ENCODE measurements at regions of chr18 and their contacts with region 1.

Region 1: DNA sequence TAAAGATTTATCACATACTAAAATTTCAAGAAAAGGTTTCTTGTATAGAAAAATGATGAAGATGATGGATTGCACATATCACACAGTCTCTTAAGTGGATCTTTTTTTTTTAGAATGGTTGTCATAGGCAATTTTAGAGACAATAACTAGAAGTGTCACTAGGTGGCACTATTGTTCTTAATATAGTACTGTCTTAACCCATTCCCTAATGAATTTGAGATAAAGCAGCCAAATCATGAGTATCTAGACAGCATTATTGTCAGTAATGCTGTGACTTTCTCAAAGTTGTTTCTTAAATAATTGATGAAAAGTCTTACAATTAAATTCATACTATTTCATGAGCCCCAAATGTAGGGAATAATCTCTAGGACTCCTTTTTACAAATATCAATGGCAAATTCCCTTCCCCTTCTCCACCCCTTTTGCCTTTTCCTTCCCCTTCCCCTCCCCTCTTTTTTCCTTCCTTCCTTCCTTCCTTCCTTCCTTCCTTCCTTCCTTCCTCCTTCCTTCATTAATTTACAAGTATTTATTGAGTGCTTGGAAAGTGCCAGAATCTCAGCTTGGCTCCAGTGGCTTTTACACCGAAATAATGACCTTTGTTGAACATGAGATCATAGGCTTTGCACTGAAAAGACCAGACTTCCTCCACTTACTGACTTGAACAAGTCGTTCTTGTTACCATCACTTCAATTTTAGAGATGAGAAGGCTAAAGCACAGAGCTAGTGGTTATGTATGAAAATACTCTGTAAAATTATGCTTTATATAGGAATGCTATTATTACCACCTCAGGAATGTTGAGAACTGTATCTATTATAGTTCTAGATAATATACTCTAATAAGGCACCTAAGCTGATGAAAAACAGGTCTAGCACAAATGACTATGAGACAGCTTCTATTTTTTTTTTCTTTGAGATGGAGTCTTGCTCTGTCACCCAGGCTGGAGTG is 19.8 kb downstream of the MYL12B start:
- DNase-seq: peak in 1 of 2 experiments; percentile 78
- H3K4me3 ChIP-seq: no peak overlapping the region
- H3K4me3 Mint-ChIP-seq: no peak overlapping the region
- H3K27ac Mint-ChIP-seq: no peak overlapping the region
- H3K4me1 ChIP-seq: no peaks in the 10 kb centered on the region
- H3K4me1 Mint-ChIP-seq: peaks cover 13% of the 10 kb centered on the region
- H3K27me3 ChIP-seq: no peaks in the 10 kb centered on the region
- H3K27me3 Mint-ChIP-seq: no peaks in the 10 kb centered on the region
- CTCF ChIP-seq: peak; percentile 33 to 66

Region 2: DNA sequence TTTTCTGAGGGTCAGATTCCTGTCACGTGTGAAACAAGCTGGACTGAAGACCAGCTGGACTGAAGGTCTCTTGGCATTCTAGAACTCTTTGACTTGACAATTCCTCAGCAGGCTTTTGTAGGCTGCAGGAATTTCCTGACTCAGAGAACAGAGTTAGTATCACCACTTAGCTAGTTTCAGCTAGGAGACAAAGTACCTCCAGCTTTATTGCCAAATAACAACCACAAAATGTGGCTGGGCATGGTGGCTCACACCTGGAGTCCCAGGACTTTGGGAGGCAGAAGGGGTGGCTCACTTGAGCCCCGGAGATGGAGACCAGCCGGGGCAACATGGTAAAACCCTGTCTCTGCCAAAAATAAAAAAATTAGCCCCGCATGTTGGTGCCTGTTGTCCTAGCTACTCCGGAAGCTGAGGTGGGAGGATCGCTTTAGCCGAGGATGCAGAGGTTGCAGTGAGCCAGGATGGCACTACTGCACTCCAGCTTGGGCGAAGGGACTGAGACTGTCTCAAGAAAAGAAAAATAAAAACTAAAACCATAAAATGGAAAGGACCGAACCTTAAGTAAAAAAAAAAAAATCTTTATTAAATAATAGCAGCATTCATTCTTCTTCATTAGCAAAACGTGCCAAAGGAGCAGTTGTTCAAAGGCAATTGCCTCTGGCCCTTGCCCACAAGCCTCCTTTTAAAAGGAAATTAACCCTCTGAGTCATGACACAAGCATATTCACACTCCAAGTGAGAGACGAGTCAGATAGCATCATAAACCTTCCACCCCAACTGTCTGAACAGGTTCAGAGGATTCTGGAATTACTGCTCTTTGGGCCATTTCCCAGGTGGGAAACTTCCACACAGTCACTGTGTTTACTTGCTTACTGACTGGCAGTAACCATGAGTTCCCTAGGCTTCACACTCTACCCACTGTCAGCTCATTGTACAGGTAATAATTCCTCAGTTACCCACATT is 69.1 kb after region 1 on chr18:
- CTCF ChIA-PET with region 1: no interaction called
- POLR2A ChIA-PET with region 1: no interaction called
- intact Hi-C with region 1: no loop called
- DNase-seq: no peak
- H3K4me3 ChIP-seq: no peak overlapping the region
- H3K4me3 Mint-ChIP-seq: no peak overlapping the region
- H3K27ac Mint-ChIP-seq: no peak overlapping the region
- H3K4me1 ChIP-seq: no peaks in the 10 kb centered on the region
- H3K4me1 Mint-ChIP-seq: no peaks in the 10 kb centered on the region
- H3K27me3 ChIP-seq: no peaks in the 10 kb centered on the region
- H3K27me3 Mint-ChIP-seq: no peaks in the 10 kb centered on the region
- CTCF ChIP-seq: no peak

Region 3: GRCh38 chr18:3869848-3870247 is 588.1 kb after region 1 on chr18:
- CTCF ChIA-PET with region 1: no interaction called
- POLR2A ChIA-PET with region 1: no interaction called
- intact Hi-C with region 1: loop called (anchors 1 kb)
- DNase-seq: peak in 1 of 2 experiments; percentile 46
- H3K4me3 ChIP-seq: no peak overlapping the region
- H3K4me3 Mint-ChIP-seq: no peak overlapping the region
- H3K27ac Mint-ChIP-seq: no peak overlapping the region
- H3K4me1 ChIP-seq: no peaks in the 10 kb centered on the region
- H3K4me1 Mint-ChIP-seq: peaks cover 7% of the 10 kb centered on the region
- H3K27me3 ChIP-seq: no peaks in the 10 kb centered on the region; the same call in 1 of the 2 replicates
- H3K27me3 Mint-ChIP-seq: peaks cover 27% of the 10 kb centered on the region
- CTCF ChIP-seq: peak; percentile 42 to 49

Measured in Caco-2 (cell line).